HepG2 (cell line): ENCODE measurements at regions of chr1 and their contacts with region 1.

Region 1: DNA sequence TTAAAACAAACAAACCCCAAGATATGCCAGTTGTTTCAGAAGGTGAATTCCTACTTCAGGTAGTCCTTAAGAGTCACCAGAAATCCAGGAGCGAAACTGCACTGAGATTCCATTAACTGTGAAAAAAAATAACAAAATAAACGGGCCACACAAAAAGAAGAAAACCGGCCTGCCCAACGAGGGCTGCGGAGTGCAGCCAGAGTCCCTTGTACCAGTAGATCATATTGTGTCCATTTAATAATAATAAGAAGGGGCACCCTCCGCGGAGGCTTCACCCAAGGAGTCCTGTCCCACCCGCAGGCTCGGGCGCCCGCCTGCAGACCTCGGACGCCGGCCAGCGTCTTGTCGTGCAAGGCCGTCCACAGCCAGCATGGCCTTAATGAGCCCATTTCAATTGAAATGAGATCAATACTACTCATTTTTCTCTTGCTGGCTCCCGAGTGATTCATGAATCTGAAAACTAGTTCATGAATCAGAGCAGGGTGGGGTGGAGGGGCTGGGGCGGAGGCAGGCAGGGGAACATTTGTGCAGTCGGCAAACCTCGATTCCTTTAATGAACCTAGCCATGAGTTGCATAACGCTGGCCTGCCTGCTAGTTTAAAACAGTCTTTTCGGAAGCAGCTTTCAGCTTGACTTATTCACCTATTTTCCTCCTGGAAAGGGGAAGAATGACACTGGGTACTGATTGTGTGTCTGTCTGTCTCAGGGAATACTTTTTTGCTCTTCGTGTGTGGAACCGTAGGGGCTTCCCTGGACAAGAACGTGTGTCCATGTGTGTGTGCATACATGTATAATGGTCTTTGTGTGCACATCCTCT is 113.1 kb upstream of the IRF2BP2 start:
- DNase-seq: peak; percentile 82
- ATAC-seq: no peak
- H3K4me3 ChIP-seq: peak overlapping the region in 1 of 3 experiments; percentile 61; a peak in 2 of 6 replicates
- H3K27ac ChIP-seq: peak overlapping the region; percentile 99
- H3K4me1 ChIP-seq: peaks cover 97% of the 10 kb centered on the region
- H3K27me3 ChIP-seq: no peaks in the 10 kb centered on the region
- CTCF ChIP-seq: no peak
- EP300 ChIP-seq: peak in 1 of 2 experiments; percentile 4; a peak in 1 of 4 replicates
- POLR2A ChIP-seq: peak in 1 of 2 experiments; percentile 48; a peak in 1 of 4 replicates
- RAD21 ChIP-seq: no peak

Region 2: DNA sequence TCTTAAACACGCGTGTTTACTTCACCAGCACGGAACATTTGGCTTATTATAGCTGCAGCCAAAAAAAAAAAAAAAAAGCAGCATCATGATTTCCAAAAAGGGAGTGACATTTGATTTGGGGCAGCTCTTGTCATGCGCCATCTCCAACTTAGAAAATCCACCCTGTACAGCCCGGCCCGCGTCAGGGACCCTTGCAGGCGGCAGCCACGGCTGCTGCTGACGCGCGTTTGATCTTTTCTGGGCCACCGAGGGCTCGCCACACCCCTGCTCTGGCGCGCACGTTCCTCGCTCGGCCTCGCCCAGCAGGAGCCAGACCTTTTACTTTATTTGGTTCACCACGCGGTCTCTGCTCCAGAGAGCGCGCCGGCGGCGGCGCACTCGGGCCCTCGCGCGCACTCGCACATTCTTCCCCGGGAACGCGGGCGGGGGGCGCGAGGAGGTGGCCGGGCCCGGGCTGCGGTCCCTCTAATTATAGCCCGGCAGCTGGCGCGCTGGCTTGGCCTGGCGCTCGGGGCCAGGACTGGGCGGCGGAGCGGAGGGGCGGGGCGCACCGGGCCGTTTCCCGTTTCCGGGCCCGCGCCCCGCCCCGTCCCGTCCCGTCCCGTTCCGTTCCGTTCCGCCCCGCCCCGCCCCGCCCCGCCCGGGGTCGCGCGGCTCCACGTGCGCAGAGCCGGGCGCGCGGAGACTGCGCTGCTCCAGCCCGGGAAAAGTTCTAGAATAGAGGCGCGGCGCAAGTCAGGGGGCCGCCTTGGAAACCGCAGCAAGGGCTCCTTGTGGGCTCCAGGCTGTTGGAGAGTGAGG is 123.3 kb before region 1 on chr1:
- CTCF ChIA-PET with region 1: no interaction called
- POLR2A ChIA-PET with region 1: interaction called, 190 read pairs
- in situ Hi-C with region 1: no loop called
- intact Hi-C with region 1: no loop called
- DNase-seq: peak; percentile 85
- ATAC-seq: peak; percentile 85
- H3K4me3 ChIP-seq: peak overlapping the region; percentile 13 to 51 (median 44); a peak in 4 of 6 replicates
- H3K27ac ChIP-seq: peak overlapping the region; percentile 100
- H3K4me1 ChIP-seq: peaks cover 41% of the 10 kb centered on the region
- H3K27me3 ChIP-seq: no peaks in the 10 kb centered on the region; a peak in 1 of 5 replicates
- CTCF ChIP-seq: 0 out of 2 replicates have a peak, but pooled peaks have one; percentile 13
- EP300 ChIP-seq: no peak; a peak in 1 of 4 replicates
- POLR2A ChIP-seq: peak; percentile 26 to 63
- RAD21 ChIP-seq: peak; percentile 81

Region 3: DNA sequence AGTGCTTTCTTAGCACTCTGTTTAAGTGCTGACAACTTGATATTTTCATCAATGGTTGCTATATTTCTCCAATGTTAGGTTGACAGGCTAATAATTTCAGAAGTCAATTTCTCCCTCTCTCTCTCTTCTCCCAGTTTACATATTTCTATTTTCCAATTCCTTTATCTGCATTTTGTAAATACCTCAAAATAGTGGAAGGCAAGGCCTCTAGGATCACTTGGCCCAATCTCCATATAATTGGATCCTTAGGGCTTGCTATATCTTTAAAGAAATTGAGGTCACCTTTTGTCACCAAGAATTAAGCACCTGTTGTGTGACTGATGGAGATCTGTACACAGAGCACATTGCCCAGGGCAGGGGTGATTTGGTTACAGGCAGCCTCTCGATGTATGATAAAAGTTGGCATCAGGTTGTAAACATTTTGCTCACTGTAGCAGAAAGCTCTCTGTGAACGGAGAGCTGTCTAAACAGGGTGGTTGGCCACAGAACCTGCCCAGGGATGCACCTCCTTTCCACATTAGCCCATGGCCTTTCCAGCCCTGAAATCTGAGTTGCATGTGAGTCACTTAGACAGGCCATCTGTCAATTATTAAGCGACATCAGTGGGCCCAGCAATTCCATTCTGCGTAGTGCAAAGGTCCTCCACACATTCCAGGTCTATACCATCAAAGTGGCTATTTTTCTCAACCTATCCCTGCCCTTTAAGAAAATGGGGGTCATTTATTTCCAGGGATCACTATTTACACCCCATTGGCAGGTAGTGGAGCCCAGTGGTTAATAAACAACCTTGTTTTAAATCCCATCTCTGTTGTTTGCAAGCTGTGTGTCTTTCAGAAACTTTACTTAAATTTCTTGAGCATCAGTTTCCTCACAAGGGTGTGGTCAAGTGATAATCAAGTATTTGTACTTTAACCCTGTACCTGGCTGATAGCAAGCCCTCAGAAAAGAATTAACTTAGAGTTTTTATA is 84.0 kb before region 1 on chr1:
- CTCF ChIA-PET with region 1: no interaction called
- POLR2A ChIA-PET with region 1: interaction called, 89 read pairs
- in situ Hi-C with region 1: no loop called
- intact Hi-C with region 1: no loop called
- DNase-seq: peak; percentile 98
- ATAC-seq: peak; percentile 87
- H3K4me3 ChIP-seq: peak overlapping the region in 1 of 3 experiments; percentile 13; a peak in 1 of 6 replicates
- H3K27ac ChIP-seq: peak overlapping the region; percentile 84
- H3K4me1 ChIP-seq: peaks cover 81% of the 10 kb centered on the region
- H3K27me3 ChIP-seq: no peaks in the 10 kb centered on the region
- CTCF ChIP-seq: 0 out of 2 replicates have a peak, but pooled peaks have one; percentile 2
- EP300 ChIP-seq: peak in 1 of 2 experiments; percentile 92; a peak in 2 of 4 replicates
- POLR2A ChIP-seq: peak; percentile 44 to 73; a peak in 3 of 4 replicates
- RAD21 ChIP-seq: peak; percentile 50; the same call in 1 of the 2 replicates

Region 4: GRCh38 chr1:234755449-234755863 is 32.3 kb after region 1 on chr1:
- CTCF ChIA-PET with region 1: no interaction called
- POLR2A ChIA-PET with region 1: interaction called, 54 read pairs
- in situ Hi-C with region 1: no loop called
- intact Hi-C with region 1: loop called (anchors 1 kb)
- DNase-seq: no peak
- ATAC-seq: no peak
- H3K4me3 ChIP-seq: no peak overlapping the region
- H3K27ac ChIP-seq: no peak overlapping the region
- H3K4me1 ChIP-seq: peaks cover 55% of the 10 kb centered on the region
- H3K27me3 ChIP-seq: no peaks in the 10 kb centered on the region
- CTCF ChIP-seq: no peak
- EP300 ChIP-seq: no peak
- POLR2A ChIP-seq: no peak
- RAD21 ChIP-seq: no peak

Region 5: GRCh38 chr1:234781241-234782065 is 58.3 kb after region 1 on chr1:
- CTCF ChIA-PET with region 1: no interaction called
- POLR2A ChIA-PET with region 1: interaction called, 19 read pairs
- in situ Hi-C with region 1: no loop called
- intact Hi-C with region 1: no loop called
- DNase-seq: peak; percentile 57
- ATAC-seq: peak; percentile 47
- H3K4me3 ChIP-seq: no peak overlapping the region
- H3K27ac ChIP-seq: no peak overlapping the region
- H3K4me1 ChIP-seq: peaks cover 29% of the 10 kb centered on the region
- H3K27me3 ChIP-seq: peaks cover 0 to 27% of the 10 kb centered on the region in 2 experiments; a peak in 3 of 5 replicates
- CTCF ChIP-seq: peak; percentile 52
- EP300 ChIP-seq: peak in 1 of 2 experiments; percentile 25; a peak in 1 of 4 replicates
- POLR2A ChIP-seq: no peak
- RAD21 ChIP-seq: peak; percentile 36; the same call in 1 of the 2 replicates

Region 6: GRCh38 chr1:234963180-234963903 is 240.2 kb after region 1 on chr1:
- CTCF ChIA-PET with region 1: no interaction called
- POLR2A ChIA-PET with region 1: interaction called, 86 read pairs
- in situ Hi-C with region 1: no loop called
- intact Hi-C with region 1: loop called (anchors 1 kb)
- DNase-seq: peak; percentile 99
- ATAC-seq: peak; percentile 70
- H3K4me3 ChIP-seq: peak overlapping the region in 2 of 3 experiments; percentile 33 to 55; a peak in 2 of 6 replicates
- H3K27ac ChIP-seq: peak overlapping the region; percentile 100
- H3K4me1 ChIP-seq: peaks cover 78% of the 10 kb centered on the region
- H3K27me3 ChIP-seq: no peaks in the 10 kb centered on the region
- CTCF ChIP-seq: no peak
- EP300 ChIP-seq: peak in 1 of 2 experiments; percentile 98; a peak in 2 of 4 replicates
- POLR2A ChIP-seq: peak; percentile 70 to 80
- RAD21 ChIP-seq: peak; percentile 26; the same call in 1 of the 2 replicates

Region 7: DNA sequence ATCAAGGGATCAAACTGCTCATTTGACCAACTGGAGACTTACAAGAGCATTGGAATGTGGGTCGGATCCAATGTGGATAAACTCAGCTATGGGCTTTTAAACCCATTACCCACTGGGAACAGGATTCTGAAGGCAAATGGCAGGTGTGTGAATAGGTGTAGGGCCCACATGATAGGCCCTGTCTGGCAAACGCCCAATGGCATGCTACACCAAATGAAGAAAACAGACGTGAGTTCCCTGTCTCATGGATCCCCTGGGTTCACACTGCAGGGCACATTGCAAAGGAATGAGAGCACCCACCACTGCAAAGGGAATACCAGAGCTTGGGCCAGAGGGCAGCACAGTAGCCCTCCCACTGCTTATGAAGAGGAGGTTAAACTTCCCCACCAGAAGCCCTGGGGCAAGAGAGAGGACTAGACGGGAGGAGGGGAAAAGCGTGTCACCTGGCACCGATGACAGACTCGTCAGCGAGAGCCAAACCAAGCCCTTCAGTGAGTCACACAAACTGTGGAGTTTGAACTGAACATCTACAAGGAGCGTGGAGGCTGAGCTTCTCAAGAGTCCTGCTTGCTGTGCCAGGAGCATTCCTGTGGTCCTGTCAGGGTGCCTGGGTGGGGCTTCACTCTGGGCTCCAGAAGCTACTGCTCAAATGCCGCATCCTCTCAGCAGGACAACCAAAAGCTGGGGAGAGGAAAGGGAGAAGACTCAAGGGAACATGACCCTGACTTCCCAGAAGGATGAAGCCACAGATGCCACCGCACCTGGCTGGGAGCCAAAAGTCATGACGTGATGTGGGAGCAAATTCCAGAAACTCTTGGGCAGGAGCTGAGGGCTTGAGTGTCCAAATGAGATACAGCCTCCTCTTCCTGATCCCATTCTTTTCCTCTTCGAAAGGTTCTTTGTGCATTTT is 344.4 kb after region 1 on chr1:
- CTCF ChIA-PET with region 1: no interaction called
- POLR2A ChIA-PET with region 1: interaction called, 79 read pairs
- in situ Hi-C with region 1: no loop called
- intact Hi-C with region 1: no loop called
- DNase-seq: peak; percentile 58
- ATAC-seq: peak; percentile 4; the same call in 2 of the 3 replicates
- H3K4me3 ChIP-seq: peak overlapping the region; percentile 41 to 76 (median 60); a peak in 5 of 6 replicates
- H3K27ac ChIP-seq: peak overlapping the region; percentile 86
- H3K4me1 ChIP-seq: peaks cover 97% of the 10 kb centered on the region
- H3K27me3 ChIP-seq: no peaks in the 10 kb centered on the region
- CTCF ChIP-seq: no peak
- EP300 ChIP-seq: no peak
- POLR2A ChIP-seq: peak in 1 of 2 experiments; percentile 21; a peak in 2 of 4 replicates
- RAD21 ChIP-seq: no peak